Activated T-helper 1 cell treated with anti-CD3 and anti-CD28 coated beads, Interleukin-12 subunit alpha, Interleukin-12 subunit beta, Interleukin-2, Interleukin-4 antibody, amounts not matched to agents 30 ng/mL and 10 ng/mL and 1 ng/mL, durations not matched to agents 14 hours and 24 hours and 36 hours (primary cell): ENCODE measurements at regions of chr3 and their contacts with region 1.

Region 1: DNA sequence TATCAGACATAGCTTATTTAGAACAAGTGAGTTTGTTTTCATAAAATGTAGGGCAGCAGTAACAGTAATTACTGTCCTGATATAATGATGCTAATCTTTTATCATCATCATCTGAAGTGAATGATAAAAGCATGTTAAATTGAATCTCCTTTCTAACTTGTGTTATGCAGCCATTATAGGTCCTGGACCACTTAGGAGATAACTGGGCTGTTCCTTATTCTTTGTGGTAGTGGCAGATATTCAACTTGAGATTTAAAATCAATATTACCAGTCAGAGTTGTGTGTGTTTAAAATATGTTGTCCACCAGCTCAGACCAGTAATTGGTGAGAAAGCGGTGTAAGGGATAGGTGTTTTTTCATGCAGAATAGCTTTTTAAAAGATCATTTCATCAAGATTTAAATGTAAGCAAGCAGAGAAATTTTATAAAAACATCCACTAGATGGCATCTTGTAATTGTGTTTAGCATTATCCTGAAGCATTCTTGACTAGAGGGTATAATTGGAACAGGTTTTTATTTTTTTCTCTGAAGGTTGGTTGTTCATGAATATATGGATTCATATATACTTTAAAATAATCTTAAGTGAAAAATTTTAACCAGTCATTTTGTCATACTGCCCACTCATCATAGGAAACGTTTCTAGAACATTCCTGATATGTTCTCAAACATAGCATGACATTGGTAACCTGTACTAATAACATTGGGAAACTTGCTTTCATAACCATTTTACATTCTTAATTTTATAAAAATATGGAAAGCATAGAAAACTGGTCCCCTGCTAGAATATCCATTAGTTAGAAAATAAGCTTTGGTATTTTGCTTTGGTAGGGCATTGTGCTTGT is 153.9 kb downstream of the BBX start:
- DNase-seq: no peak
- H3K4me3 Mint-ChIP-seq: no peak overlapping the region
- H3K27ac Mint-ChIP-seq: no peak overlapping the region
- H3K4me1 Mint-ChIP-seq: peaks cover 32% of the 10 kb centered on the region
- H3K27me3 Mint-ChIP-seq: no peaks in the 10 kb centered on the region

Region 2: GRCh38 chr3:107346564-107346963 is 330.1 kb before region 1 on chr3:
- intact Hi-C with region 1: no loop called
- DNase-seq: no peak
- H3K4me3 Mint-ChIP-seq: no peak overlapping the region
- H3K27ac Mint-ChIP-seq: no peak overlapping the region
- H3K4me1 Mint-ChIP-seq: no peaks in the 10 kb centered on the region
- H3K27me3 Mint-ChIP-seq: peaks cover 3% of the 10 kb centered on the region

Region 3: DNA sequence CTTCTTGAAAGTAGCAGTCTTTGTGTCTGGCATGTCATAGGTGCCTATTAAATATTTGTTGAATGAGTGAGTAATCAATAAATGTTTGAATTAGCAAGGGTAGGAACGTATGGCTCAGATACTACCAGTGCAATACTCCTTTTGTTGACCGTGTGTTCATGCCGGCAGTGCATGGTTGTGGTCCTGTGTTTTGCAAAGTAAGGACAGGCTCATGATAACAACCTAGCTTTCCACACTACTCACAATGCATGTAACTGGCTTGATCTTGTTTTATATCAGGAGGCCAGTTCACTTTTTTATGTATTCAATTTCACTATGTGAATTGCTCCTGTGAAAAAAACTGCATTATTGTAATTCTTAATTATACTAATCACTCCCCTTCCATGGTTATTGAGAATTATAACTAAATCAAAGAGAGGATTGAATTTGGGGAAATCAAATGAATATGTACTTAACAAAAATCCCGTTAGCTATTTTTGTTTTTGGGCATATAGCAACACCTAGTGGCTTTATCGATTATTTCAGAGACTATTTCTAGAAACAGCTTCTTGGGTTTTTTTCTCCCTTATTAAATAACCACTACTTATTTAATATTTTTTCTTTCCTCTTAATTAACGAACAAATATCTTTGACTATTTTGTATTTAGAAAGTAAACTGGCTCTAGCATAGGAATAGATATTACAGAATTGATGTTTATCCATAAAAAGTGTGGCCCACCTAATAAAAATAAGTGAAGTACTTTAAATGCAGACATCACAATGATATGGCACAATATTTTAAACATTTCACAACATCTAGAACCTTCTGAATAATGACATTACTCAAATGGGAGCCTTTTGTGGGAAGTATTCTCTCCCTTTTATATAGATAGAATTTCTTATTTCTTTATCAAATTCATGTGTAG is 64.6 kb after region 1 on chr3:
- intact Hi-C with region 1: loop called (anchors 1 kb)
- DNase-seq: no peak
- H3K4me3 Mint-ChIP-seq: no peak overlapping the region
- H3K27ac Mint-ChIP-seq: no peak overlapping the region
- H3K4me1 Mint-ChIP-seq: no peaks in the 10 kb centered on the region
- H3K27me3 Mint-ChIP-seq: no peaks in the 10 kb centered on the region

Region 4: DNA sequence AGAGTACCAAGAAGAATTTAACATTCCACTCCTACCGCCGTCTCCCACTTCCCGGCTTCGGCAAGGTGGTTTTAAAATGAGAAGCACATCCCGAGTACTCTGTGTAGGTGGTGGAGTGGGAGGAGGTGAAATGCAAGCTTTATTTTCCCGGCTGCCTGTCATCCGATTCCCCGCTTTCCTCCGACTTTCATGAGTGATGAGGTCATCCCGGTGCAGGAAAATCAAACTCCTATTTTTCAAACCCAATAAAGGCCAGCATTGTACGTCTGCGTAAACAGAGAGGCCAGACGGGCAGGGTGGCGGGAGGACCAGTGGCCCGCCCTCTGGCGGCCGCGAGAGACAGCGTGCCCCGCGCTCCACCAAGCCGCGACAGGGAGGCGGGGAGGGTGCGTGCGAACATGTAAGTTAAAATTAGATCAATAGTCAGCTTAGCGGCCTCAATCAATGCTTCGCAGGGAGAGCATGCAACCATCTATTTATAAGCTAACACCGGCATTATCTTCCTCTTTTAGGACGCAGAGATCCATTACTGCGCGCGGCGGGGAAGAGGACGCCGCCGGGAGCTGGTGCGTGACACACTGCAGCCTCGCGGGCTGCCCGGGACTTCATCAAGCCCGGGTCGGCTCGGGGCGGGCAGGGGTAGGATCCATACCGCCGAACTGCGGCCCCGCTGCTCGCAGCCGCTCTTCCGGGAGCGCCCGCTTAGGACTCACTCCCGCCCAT is 250.8 kb after region 1 on chr3:
- intact Hi-C with region 1: loop called (anchors 5 kb)
- DNase-seq: peak; percentile 50
- H3K4me3 Mint-ChIP-seq: peak overlapping the region; percentile 85
- H3K27ac Mint-ChIP-seq: no peak overlapping the region
- H3K4me1 Mint-ChIP-seq: peaks cover 9% of the 10 kb centered on the region
- H3K27me3 Mint-ChIP-seq: peaks cover 18% of the 10 kb centered on the region

Region 5: GRCh38 chr3:108477511-108478147 is 800.9 kb after region 1 on chr3:
- intact Hi-C with region 1: loop called (anchors 1 kb)
- DNase-seq: peak; percentile 50
- H3K4me3 Mint-ChIP-seq: no peak overlapping the region
- H3K27ac Mint-ChIP-seq: no peak overlapping the region
- H3K4me1 Mint-ChIP-seq: no peaks in the 10 kb centered on the region
- H3K27me3 Mint-ChIP-seq: peaks cover 13% of the 10 kb centered on the region